GM12878 (cell line): ENCODE measurements at regions of chr1 and their contacts with region 1.

Region 1: DNA sequence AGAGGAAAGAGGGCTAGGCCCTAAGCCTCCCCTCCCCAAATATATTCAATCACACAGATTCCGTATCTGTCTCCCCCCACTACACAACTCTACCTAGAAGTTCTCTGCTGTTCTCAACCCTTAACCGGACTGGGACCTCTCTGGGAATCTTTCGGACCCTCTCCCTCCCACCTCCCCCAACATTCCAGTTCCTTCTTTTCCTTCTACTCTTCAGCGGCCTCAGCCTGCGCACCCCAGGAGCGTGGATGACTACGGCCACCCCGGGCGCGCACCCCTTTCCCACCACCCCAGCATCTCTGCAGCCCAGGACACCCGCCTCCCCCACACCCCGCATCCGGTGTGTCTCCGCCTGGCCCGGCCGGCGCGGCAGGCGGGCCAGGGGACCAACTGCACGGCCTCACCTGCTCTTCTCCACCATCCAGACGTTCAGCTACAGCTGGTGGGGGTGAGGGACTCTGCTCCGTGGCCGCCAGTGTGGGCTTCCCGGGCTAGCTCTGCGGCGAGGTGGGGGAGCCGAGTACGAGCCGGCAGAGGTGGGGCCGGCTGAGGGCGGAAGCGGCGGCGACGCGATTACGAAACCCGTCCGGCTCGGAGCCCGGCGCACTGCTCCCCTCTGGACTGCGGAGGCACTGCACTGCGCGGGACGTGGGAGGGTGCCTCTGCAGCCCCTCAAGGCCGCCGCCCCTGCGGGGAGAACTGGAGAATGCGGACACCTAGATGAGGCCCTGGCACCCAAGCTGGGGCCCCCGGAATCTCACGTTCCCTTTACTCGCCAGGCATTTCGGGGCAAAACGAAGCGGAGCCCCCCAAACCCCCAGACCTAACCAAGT is at the start of gene CDC42SE1:
- DNase-seq: peak; percentile 55
- ATAC-seq: peak; percentile 86
- H3K4me3 ChIP-seq: peak within 1 kb of the TSS; percentile 93
- H3K27ac ChIP-seq: peak within 1 kb of the TSS; percentile 97
- H3K4me1 ChIP-seq: peaks cover 28% of the 10 kb centered on the region
- H3K27me3 ChIP-seq: no peaks in the 10 kb centered on the region
- CTCF ChIP-seq: peak; percentile 75 to 90 (median 84)
- EP300 ChIP-seq: no peak
- POLR2A ChIP-seq: peak; percentile 98
- RAD21 ChIP-seq: 0 out of 2 replicates have a peak, but pooled peaks have one; percentile 1
- polyA plus RNA-seq, gene CDC42SE1: 36.9 to 38.0 TPM

Region 2: DNA sequence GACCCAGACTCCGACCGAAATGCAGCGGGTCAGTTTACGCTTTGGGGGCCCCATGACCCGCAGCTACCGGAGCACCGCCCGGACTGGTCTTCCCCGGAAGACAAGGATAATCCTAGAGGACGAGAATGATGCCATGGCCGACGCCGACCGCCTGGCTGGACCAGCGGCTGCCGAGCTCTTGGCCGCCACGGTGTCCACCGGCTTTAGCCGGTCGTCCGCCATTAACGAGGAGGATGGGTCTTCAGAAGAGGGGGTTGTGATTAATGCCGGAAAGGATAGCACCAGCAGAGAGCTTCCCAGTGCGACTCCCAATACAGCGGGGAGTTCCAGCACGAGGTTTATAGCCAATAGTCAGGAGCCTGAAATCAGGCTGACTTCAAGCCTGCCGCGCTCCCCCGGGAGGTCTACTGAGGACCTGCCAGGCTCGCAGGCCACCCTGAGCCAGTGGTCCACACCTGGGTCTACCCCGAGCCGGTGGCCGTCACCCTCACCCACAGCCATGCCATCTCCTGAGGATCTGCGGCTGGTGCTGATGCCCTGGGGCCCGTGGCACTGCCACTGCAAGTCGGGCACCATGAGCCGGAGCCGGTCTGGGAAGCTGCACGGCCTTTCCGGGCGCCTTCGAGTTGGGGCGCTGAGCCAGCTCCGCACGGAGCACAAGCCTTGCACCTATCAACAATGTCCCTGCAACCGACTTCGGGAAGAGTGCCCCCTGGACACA is 11.2 kb before region 1 on chr1:
- CTCF ChIA-PET with region 1: interaction called, 76 read pairs
- POLR2A ChIA-PET with region 1: interaction called, 65 read pairs
- RAD21 ChIA-PET with region 1: interaction called, 12 read pairs
- SMC1A ChIA-PET with region 1: interaction called, 9 read pairs
- in situ Hi-C with region 1: no loop called
- intact Hi-C with region 1: no loop called
- DNase-seq: no peak
- ATAC-seq: peak; percentile 85
- H3K4me3 ChIP-seq: peak overlapping the region; percentile 87
- H3K27ac ChIP-seq: peak overlapping the region; percentile 49
- H3K4me1 ChIP-seq: peaks cover 8% of the 10 kb centered on the region; the same call in 1 of the 2 replicates
- H3K27me3 ChIP-seq: no peaks in the 10 kb centered on the region
- CTCF ChIP-seq: peak in 2 of 3 experiments; percentile 47 to 54; a peak in 5 of 6 replicates
- EP300 ChIP-seq: no peak
- POLR2A ChIP-seq: peak; percentile 77; the same call in 1 of the 2 replicates
- RAD21 ChIP-seq: no peak

Region 3: GRCh38 chr1:151070474-151071276 is 11.4 kb after region 1 on chr1 and contains the start of gene GABPB2:
- CTCF ChIA-PET with region 1: interaction called, 19 read pairs
- POLR2A ChIA-PET with region 1: interaction called, 38 read pairs
- RAD21 ChIA-PET with region 1: interaction called, 8 read pairs
- SMC1A ChIA-PET with region 1: interaction called, 22 read pairs
- in situ Hi-C with region 1: no loop called
- intact Hi-C with region 1: loop called (anchors 1 kb)
- DNase-seq: peak; percentile 72
- ATAC-seq: peak; percentile 97
- H3K4me3 ChIP-seq: peak within 1 kb of the TSS; percentile 99
- H3K27ac ChIP-seq: peak within 1 kb of the TSS; percentile 100
- H3K4me1 ChIP-seq: peaks cover 8% of the 10 kb centered on the region
- H3K27me3 ChIP-seq: no peaks in the 10 kb centered on the region
- CTCF ChIP-seq: peak; percentile 82 to 98 (median 85)
- EP300 ChIP-seq: no peak
- POLR2A ChIP-seq: peak; percentile 92
- RAD21 ChIP-seq: peak; percentile 29; the same call in 1 of the 2 replicates
- polyA plus RNA-seq, gene GABPB2: 2.3 to 2.6 TPM